GM10248 (cell line): ENCODE measurements at regions of chr12 and their contacts with region 1.

Region 1: DNA sequence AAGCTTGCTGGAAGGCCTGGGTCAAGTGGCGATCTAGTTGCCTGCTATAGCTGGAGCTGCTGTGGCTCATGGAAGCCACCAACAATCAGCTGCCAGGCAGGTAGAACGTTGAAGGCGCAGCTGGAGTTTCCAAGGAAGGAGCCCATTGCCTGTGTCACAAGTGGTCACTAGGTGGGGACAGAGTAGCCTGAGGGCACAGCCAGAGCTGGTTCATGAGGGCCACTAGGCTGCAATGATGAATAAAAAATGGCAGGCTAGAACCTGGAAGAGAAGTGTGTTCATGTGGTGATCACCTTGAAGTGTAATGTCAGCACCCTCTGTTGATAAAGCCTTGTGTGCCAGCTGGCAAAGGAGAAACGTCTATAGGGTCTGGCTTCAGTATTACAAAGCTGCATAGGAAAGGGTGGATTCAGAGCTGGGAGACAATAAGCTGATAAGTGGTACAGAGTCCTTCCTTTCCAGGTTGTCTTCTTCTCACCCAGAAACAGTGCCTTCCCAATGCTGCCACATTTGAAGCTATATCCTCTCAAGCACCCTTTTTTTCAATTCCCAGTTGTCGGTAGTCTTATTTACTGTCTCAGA is 165.8 kb downstream of the EMP1 start:
- DNase-seq: peak; percentile 65
- CTCF ChIP-seq: peak; percentile 85

Region 2: GRCh38 chr12:13347241-13348043 is 14.9 kb before region 1 on chr12:
- CTCF ChIA-PET with region 1: interaction called, 11 read pairs
- POLR2A ChIA-PET with region 1: no interaction called
- DNase-seq: no peak
- CTCF ChIP-seq: no peak

Region 3: GRCh38 chr12:13376627-13377373 is 14.4 kb after region 1 on chr12:
- CTCF ChIA-PET with region 1: interaction called, 27 read pairs
- POLR2A ChIA-PET with region 1: no interaction called
- DNase-seq: no peak
- CTCF ChIP-seq: no peak

Region 4: DNA sequence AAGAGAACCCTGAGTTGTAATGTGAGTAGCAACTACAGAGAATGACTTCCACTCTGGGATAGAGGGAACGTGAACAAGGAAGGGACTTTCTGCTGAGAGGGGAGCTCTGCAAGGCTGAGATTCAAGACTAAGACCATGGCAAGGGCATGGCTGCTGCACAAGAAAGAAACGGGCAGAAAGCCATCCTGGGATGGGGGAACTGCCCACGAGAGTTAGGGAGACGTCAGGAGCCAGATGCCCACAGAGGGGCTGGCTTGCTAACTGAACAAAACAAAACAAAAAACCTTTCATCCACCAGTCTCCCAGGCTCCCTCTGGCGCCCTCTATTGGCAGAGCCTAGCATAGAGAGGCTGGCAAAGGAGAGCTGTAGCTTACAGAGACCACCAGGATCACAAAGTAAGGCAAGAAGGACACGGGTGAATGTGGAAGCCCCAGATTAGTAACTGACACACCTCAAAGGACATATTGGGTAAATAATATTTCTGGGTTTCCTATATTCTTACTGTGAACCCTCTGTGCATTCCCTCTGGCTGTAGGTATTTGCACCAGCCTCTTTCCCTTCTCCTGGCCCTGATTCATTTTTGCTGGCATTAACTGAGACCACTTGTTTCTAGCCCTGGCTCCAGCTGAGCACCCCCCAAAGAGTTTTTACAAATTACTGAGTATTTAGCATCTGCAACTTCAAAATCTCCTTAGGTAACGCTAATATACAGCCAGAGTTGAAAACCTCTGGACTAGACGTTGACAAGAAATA is 172.5 kb after region 1 on chr12:
- CTCF ChIA-PET with region 1: interaction called, 17 read pairs
- POLR2A ChIA-PET with region 1: no interaction called
- DNase-seq: peak; percentile 15
- CTCF ChIP-seq: peak; percentile 60

Region 5: DNA sequence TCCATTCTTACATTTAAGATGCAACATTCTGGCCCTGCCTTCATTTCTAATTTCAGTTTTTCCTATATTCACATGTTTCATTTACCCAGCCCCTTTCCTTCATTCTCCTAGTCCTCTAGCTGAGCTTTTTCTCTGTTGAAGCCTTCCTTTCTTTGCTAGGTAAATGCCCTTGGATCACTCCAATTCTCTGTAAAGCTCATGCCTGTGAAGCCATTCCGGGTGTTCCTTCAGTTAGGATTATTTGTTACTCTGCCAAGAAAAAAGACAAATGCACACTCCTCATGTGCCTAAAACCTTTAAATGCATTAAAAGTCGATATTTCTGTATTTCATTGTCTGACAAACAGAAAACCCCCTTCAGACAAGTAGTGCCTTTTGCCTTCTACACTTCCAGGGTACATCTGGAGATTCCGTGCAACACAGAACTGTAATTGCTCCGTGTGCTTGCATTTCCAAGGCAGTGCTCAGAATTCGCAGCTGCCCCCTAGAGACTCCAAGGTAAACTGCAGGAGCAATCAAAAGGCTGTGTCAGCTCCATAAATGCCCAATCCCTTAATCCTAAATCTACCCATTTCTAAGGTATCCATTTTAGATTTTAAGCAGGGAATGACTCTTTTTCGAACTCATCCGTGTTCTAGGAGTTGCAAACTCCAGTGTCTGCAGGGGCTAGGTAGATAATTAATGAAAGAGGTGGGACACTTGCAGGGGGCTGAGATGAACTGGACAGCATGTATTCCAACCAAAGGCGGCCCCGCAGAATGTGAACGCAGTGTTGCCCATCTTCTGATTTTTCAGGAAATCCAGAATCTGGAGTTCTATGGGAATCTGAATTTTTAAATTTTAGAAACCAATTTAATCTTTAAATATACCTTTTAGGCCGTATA is 298.9 kb after region 1 on chr12:
- CTCF ChIA-PET with region 1: interaction called, 53 read pairs
- POLR2A ChIA-PET with region 1: no interaction called
- DNase-seq: peak; percentile 31
- CTCF ChIP-seq: peak; percentile 62

Region 6: DNA sequence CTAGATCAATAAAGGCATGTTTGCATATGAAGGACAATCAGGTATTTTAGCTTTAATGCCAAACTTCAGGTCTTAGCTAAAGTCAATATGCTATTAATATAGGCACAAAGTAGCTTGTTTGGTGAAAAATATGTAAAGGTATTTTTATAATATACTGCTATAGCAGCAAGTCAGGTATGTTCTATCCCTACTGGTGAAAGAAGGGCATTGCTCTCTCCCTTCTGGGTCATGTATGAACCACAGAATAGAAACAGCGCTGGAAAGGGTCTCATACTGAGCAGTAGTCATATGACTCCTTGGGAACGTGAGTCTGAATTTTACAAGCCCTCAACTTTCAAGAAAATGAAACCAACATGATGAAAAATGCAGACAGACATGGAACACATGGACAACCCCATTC is 304.5 kb after region 1 on chr12:
- CTCF ChIA-PET with region 1: interaction called, 53 read pairs
- POLR2A ChIA-PET with region 1: no interaction called
- DNase-seq: no peak
- CTCF ChIP-seq: no peak

Region 7: GRCh38 chr12:14167005-14167628 is 804.8 kb after region 1 on chr12:
- CTCF ChIA-PET with region 1: interaction called, 11 read pairs
- POLR2A ChIA-PET with region 1: no interaction called
- DNase-seq: peak; percentile 65
- CTCF ChIP-seq: peak; percentile 91